IMR-90 (cell line): ENCODE measurements at regions of chr17 and their contacts with region 1.

Region 1: DNA sequence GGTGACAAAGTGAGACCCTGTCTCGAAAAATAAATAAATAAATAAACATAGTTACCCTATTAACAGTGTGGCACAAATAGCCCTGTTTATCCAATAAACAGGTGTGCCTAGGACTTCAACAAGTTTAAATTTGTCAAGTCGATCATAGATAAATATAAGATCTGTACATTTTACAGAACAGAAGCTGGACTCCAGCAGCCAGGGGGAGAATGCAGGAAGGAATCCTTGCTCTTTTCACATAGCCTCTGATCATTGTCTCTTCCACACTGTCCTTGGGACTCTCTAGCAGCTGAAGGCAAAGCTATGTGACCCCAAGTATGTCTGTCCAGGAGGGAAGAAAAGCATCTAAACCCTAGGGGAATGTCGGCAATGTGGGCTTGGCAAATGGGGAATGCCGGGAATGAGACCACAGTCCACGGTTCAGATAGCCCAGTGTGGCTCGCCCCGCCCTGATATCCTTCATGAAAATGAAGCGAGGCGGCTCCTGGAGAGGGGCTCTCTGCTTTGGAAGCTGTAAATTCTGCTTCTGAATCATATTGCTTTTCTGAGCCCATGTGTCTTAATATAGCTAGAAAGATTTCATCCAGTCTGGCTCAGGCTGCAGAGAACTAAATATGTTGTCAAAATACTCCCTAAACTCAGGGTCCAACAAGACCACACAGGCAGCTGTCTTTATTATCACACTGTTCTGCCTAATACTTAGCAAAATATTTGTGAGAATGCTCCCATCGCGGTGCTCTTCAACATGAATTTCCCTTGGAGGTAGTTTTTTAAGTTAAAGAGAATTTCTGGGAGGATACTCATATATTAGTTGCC is 24.9 kb upstream of the GRB2 start:
- DNase-seq: peak; percentile 55
- ATAC-seq: peak; percentile 73
- H3K4me3 ChIP-seq: no peak overlapping the region
- H3K27ac ChIP-seq: peak overlapping the region; percentile 24; the same call in 1 of the 2 replicates
- H3K4me1 ChIP-seq: peaks cover 8% of the 10 kb centered on the region; the same call in 1 of the 2 replicates
- H3K27me3 ChIP-seq: no peaks in the 10 kb centered on the region
- CTCF ChIP-seq: no peak
- POLR2A ChIP-seq: no peak
- RAD21 ChIP-seq: no peak

Region 2: DNA sequence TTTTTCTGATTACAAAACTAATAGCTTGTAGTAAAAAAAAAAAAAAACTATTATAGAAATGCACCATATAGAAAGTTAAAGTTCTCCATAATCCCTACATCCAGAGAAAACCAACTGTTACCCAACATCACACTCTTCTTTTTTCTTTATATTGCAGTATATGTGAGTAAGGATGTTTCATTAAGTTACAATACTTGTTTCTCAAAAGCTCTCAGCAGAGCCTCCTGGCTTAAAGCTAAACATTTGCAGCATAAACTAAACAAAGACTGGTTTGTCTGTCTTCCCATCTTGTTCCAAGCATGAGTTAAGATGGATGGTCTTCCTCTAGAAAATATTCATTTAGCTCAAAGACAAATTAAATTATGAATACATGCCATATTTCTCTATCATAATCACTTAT is 50.1 kb before region 1 on chr17:
- CTCF ChIA-PET with region 1: no interaction called
- POLR2A ChIA-PET with region 1: no interaction called
- dilution Hi-C with region 1: no loop called
- in situ Hi-C with region 1: no loop called
- intact Hi-C with region 1: no loop called
- DNase-seq: peak; percentile 77
- ATAC-seq: peak; percentile 86
- H3K4me3 ChIP-seq: no peak overlapping the region
- H3K27ac ChIP-seq: no peak overlapping the region
- H3K4me1 ChIP-seq: peaks cover 4% of the 10 kb centered on the region
- H3K27me3 ChIP-seq: no peaks in the 10 kb centered on the region
- CTCF ChIP-seq: no peak
- POLR2A ChIP-seq: no peak
- RAD21 ChIP-seq: no peak

Region 3: GRCh38 chr17:75418531-75418930 is 11.8 kb before region 1 on chr17:
- CTCF ChIA-PET with region 1: no interaction called
- POLR2A ChIA-PET with region 1: interaction called, 13 read pairs
- dilution Hi-C with region 1: no loop called
- in situ Hi-C with region 1: no loop called
- intact Hi-C with region 1: no loop called
- DNase-seq: no peak
- ATAC-seq: no peak
- H3K4me3 ChIP-seq: no peak overlapping the region
- H3K27ac ChIP-seq: no peak overlapping the region
- H3K4me1 ChIP-seq: no peaks in the 10 kb centered on the region
- H3K27me3 ChIP-seq: peaks cover 7% of the 10 kb centered on the region
- CTCF ChIP-seq: no peak
- POLR2A ChIP-seq: no peak
- RAD21 ChIP-seq: no peak

Region 4: DNA sequence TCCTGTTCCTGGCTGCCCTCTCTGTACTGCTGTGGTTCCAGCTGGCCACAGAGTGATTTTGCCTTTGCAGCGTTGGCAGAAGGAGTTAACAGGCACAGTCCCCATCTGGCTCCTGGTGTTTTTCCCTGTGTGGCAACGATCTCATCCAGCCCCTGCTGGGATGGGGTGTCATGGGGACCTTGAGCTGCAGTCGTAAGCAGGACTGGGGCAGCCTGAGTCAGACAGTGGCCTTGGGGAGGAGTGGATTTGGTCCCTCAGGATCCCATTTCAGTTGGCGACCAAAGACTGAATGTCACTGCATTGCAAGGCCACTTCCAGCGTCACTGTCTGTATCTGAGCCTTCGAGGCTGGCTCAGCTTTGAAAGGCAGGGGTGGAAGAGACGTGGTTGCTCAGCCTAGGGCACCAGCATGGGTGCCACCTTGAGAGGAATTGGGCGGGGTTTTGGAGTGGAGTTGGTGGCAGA is 38.0 kb after region 1 on chr17:
- CTCF ChIA-PET with region 1: no interaction called
- POLR2A ChIA-PET with region 1: no interaction called
- dilution Hi-C with region 1: no loop called
- in situ Hi-C with region 1: no loop called
- intact Hi-C with region 1: loop called (anchors 5 kb)
- DNase-seq: no peak
- ATAC-seq: no peak
- H3K4me3 ChIP-seq: no peak overlapping the region
- H3K27ac ChIP-seq: no peak overlapping the region
- H3K4me1 ChIP-seq: no peaks in the 10 kb centered on the region
- H3K27me3 ChIP-seq: no peaks in the 10 kb centered on the region
- CTCF ChIP-seq: no peak
- POLR2A ChIP-seq: no peak
- RAD21 ChIP-seq: no peak

Region 5: DNA sequence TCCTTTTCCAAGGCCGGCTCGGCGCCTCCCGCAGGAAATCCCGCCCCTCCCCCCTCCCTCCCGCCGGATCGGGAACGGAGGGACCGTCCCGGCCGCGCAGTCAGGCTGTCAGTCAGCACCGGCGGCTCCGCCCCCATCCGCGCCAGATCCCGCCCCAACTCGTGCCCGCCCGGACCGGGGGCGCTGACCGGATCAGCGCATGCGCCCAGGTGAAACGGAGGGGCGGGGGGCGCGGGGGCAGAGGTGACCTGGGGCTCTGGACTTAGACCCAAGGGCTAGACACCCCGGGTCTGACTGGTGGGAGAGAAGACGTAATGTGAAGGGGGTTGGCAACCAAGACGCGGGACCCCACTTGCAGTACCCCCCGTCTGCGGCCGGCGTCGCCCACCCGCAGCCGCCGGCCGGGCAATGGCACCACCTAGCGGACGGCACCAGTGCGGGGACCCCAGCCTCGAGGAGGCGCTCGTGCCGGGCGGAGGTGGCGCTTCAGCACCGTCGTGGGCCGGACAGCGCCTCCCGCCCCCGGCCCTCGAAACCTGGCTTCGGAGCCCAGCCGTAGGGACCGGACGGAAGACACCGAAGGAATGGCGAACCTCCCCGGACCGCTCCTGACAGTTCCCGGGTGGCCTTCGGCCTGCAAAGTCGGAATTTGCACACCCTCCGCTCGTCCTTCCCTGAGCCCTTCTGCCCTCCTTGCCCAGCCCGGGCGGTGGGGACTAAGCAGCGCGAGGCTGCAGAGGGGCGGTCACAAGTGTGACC is 85.3 kb after region 1 on chr17 and contains the start of gene CASKIN2:
- CTCF ChIA-PET with region 1: interaction called, 3 read pairs
- POLR2A ChIA-PET with region 1: no interaction called
- dilution Hi-C with region 1: no loop called
- in situ Hi-C with region 1: loop called (anchors 5 kb)
- intact Hi-C with region 1: loop called (anchors 1 kb)
- DNase-seq: peak; percentile 86
- ATAC-seq: peak; percentile 79
- H3K4me3 ChIP-seq: peak within 1 kb of the TSS; percentile 82
- H3K27ac ChIP-seq: peak within 1 kb of the TSS; percentile 51
- H3K4me1 ChIP-seq: peaks cover 10% of the 10 kb centered on the region; the same call in 1 of the 2 replicates
- H3K27me3 ChIP-seq: no peaks in the 10 kb centered on the region
- CTCF ChIP-seq: peak; percentile 100
- POLR2A ChIP-seq: no peak
- RAD21 ChIP-seq: peak; percentile 82
- total RNA-seq, gene CASKIN2: 2.2 and 2.9 TPM in 2 replicates

Region 6: GRCh38 chr17:75589012-75589918 is 158.9 kb after region 1 on chr17:
- CTCF ChIA-PET with region 1: no interaction called
- POLR2A ChIA-PET with region 1: no interaction called
- dilution Hi-C with region 1: no loop called
- in situ Hi-C with region 1: no loop called
- intact Hi-C with region 1: loop called (anchors 1 kb)
- DNase-seq: peak; percentile 64
- ATAC-seq: peak; percentile 97
- H3K4me3 ChIP-seq: peak overlapping the region; percentile 59
- H3K27ac ChIP-seq: peak overlapping the region; percentile 20; the same call in 1 of the 2 replicates
- H3K4me1 ChIP-seq: no peaks in the 10 kb centered on the region
- H3K27me3 ChIP-seq: peaks cover 29% of the 10 kb centered on the region
- CTCF ChIP-seq: peak; percentile 64
- POLR2A ChIP-seq: no peak
- RAD21 ChIP-seq: peak; percentile 32

Region 7: GRCh38 chr17:75632863-75633485 is 202.6 kb after region 1 on chr17 and contains the start of gene SMIM5:
- CTCF ChIA-PET with region 1: no interaction called
- POLR2A ChIA-PET with region 1: no interaction called
- dilution Hi-C with region 1: no loop called
- in situ Hi-C with region 1: no loop called
- intact Hi-C with region 1: loop called (anchors 1 kb)
- DNase-seq: peak; percentile 83
- ATAC-seq: peak; percentile 93
- H3K4me3 ChIP-seq: no peak within 1 kb of the TSS
- H3K27ac ChIP-seq: peak within 1 kb of the TSS; percentile 0; the same call in 1 of the 2 replicates
- H3K4me1 ChIP-seq: peaks cover 15% of the 10 kb centered on the region
- H3K27me3 ChIP-seq: no peaks in the 10 kb centered on the region
- CTCF ChIP-seq: peak; percentile 94
- POLR2A ChIP-seq: no peak
- RAD21 ChIP-seq: peak; percentile 69
- total RNA-seq, gene SMIM5: not detected in 2 replicates

Region 8: DNA sequence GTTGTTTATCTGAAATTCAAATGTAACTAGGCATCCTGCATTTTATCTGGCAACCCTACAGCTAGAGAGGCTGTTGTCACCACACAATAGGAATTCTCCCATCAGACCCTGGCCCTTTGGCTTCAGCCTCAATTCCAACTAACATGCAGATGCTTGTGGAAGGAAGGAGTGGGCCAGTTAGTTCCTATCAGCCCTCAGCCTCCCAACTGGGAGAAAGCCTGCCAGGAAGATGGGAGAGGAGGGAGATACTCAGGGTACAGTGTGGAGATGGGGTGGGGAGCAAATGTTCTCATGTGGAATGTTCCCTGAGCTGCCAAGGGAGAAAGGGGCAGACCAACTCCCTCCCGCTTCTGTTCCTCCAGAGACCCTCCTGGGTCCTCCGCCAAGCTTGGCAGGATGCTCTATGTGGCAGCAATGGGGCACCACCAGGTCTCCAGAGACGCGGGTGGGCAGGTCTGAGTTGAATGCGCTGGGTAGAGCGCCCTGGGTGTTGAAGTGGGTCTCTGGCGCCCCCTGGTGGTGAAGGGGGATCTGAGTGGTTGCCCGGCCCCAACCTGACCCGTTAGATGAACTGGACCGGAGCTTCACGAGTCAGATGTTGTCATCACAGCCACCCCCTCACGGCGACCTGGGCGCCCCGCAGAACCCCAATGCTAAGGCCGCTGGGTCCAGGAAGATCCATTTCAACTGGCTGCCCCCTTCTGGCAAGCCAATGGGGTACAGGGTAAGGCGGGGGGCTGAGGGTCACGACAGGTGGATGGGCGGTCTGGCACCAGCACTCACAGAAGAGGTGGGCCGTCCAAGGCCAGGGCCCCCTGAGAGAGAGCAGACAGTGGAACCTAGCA is 319.4 kb after region 1 on chr17:
- CTCF ChIA-PET with region 1: no interaction called
- POLR2A ChIA-PET with region 1: no interaction called
- dilution Hi-C with region 1: no loop called
- in situ Hi-C with region 1: loop called (anchors 10 kb)
- intact Hi-C with region 1: no loop called
- DNase-seq: peak; percentile 52
- ATAC-seq: peak; percentile 73
- H3K4me3 ChIP-seq: no peak overlapping the region
- H3K27ac ChIP-seq: no peak overlapping the region
- H3K4me1 ChIP-seq: peaks cover 6% of the 10 kb centered on the region
- H3K27me3 ChIP-seq: no peaks in the 10 kb centered on the region; the same call in 1 of the 2 replicates
- CTCF ChIP-seq: peak; percentile 87
- POLR2A ChIP-seq: no peak
- RAD21 ChIP-seq: peak; percentile 82